Heart left ventricle (tissue), 16 donors: ENCODE measurements at regions of chr4 and their contacts with region 1.

Region 1: DNA sequence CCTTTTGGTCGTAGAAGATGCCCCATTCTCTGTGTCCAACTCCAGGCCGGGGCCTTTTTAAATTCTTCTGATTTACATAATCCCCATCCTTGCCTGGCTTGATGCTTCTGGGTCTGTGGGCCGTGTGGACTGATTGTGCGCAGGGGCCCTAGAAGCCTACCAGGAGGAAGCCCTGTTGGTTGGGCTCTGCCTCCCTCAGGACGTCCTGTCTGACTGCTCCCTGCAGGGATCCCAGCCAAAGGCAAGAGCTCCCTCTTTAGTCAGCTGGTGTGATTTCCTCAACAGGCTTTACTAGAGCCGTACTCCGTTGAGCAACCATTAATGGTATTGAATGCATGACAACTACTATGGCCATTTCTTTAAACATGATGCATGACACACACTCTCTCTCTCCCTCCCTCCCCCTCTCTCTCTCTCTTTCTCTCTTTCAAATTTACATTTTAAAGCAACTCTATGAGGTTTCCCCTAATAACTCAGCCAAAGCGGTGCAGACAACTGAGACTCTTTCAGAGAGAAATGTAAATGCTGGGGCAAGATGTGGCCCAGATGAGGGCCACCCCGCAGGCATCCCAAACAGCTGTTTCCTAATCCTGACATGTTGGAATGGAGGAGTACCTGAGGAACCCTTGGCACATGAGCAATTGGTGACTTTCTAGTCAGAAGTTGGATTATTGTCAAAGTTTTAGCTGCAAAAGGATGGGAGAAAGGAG is 117.3 kb downstream of the DRD5 start:
- DNase-seq: peak in 4 of 5 donors; percentile 56 to 80 (median 74)
- ATAC-seq: peak; percentile 89 to 92 (median 91)
- H3K4me3 ChIP-seq: no peak overlapping the region
- H3K27ac ChIP-seq: no peak overlapping the region
- H3K4me1 ChIP-seq: peaks cover 0 to 14% (median 1%) of the 10 kb centered on the region in 12 donors
- H3K27me3 ChIP-seq: no peaks in the 10 kb centered on the region
- CTCF ChIP-seq: peak; percentile 21 to 70 (median 48)
- POLR2A ChIP-seq: no peak

Region 2: DNA sequence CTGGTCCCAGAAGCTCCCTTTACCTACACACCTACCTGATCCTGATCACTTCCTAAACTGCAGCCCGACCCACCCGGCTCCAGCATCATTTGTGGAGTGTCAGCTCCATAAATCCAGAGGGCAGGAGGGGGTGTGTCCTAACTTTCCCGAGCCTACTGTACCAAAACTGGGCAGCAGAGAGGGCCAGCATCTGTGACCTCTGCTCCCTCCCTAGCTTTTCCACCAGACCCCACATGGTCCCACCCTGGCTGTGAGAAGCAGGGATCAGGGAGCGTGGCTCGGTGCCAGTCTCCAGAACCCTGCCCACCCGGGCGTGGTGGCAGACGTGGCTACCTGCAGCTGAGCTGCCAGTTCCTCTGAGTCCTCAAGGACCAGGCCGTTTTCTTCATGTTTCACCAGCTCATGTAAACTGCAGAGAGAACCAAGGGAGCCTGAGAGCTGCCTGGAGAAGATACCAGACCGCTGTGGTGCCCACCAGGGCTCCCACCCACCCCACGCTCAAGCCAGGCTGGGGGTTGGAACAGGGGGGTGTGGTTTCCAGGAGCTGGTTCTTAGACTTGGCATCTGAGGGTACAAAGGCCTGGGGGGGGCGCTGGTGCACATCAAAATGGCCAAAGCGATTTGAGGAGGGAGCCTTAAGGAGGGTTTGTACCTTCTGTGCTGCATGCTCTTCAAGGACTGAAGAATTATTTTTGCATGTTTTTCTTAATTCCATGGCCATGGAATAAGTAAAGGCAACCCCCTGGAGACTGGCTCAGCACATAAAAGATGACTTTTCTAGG is 194.0 kb before region 1 on chr4:
- intact Hi-C with region 1: loop called in 1 of 10 experiments (anchors 10 kb)
- DNase-seq: no peak
- ATAC-seq: no peak
- H3K4me3 ChIP-seq: no peak overlapping the region
- H3K27ac ChIP-seq: no peak overlapping the region
- H3K4me1 ChIP-seq: no peaks in the 10 kb centered on the region
- H3K27me3 ChIP-seq: peaks cover 0 to 4% (median 0%) of the 10 kb centered on the region in 9 donors
- CTCF ChIP-seq: no peak
- POLR2A ChIP-seq: no peak

Region 3: GRCh38 chr4:9804918-9805317 is 93.8 kb before region 1 on chr4:
- intact Hi-C with region 1: no loop called
- DNase-seq: no peak
- ATAC-seq: no peak
- H3K4me3 ChIP-seq: no peak overlapping the region
- H3K27ac ChIP-seq: no peak overlapping the region
- H3K4me1 ChIP-seq: no peaks in the 10 kb centered on the region
- H3K27me3 ChIP-seq: peaks cover 0 to 11% (median 0%) of the 10 kb centered on the region in 9 donors
- CTCF ChIP-seq: no peak
- POLR2A ChIP-seq: no peak

Region 4: GRCh38 chr4:10006231-10006600 is 107.5 kb after region 1 on chr4:
- intact Hi-C with region 1: loop called in 8 of 10 experiments (anchors 5 to 10 kb)
- DNase-seq: peak in 1 of 5 donors; percentile 45
- ATAC-seq: peak; percentile 76 to 93 (median 88)
- H3K4me3 ChIP-seq: no peak overlapping the region
- H3K27ac ChIP-seq: peak overlapping the region in 10 of 12 donors; percentile 8 to 54 (median 31)
- H3K4me1 ChIP-seq: peaks cover 0 to 46% (median 25%) of the 10 kb centered on the region in 12 donors
- H3K27me3 ChIP-seq: no peaks in the 10 kb centered on the region
- CTCF ChIP-seq: no peak
- POLR2A ChIP-seq: no peak

Region 5: DNA sequence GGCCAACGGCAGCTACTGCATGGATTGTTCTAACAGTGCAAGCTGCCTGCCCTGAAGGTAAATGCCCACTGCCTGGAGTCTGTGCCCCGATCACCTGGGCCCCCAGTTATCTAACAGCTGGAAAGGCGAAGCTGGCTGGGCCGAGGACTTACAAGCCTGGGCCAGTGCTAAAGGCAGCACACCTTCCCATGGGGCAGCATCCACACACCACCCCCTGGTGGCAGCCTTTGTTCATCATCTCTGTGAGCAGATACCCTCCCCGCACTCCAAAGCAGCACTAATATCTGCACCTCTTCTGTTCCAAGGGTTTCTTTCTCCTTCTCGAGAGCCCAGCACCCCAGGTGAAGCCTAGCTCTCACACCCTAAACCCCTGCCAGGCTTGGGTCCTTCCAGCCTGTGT is 115.0 kb after region 1 on chr4:
- intact Hi-C with region 1: loop called in 9 of 10 experiments (anchors 2 to 10 kb)
- DNase-seq: peak in 2 of 5 donors; percentile 46 to 58
- ATAC-seq: peak; percentile 40 to 71 (median 69)
- H3K4me3 ChIP-seq: no peak overlapping the region
- H3K27ac ChIP-seq: no peak overlapping the region
- H3K4me1 ChIP-seq: peaks cover 0 to 17% (median 6%) of the 10 kb centered on the region in 12 donors
- H3K27me3 ChIP-seq: no peaks in the 10 kb centered on the region
- CTCF ChIP-seq: peak; percentile 34 to 60 (median 39)
- POLR2A ChIP-seq: no peak

Region 6: DNA sequence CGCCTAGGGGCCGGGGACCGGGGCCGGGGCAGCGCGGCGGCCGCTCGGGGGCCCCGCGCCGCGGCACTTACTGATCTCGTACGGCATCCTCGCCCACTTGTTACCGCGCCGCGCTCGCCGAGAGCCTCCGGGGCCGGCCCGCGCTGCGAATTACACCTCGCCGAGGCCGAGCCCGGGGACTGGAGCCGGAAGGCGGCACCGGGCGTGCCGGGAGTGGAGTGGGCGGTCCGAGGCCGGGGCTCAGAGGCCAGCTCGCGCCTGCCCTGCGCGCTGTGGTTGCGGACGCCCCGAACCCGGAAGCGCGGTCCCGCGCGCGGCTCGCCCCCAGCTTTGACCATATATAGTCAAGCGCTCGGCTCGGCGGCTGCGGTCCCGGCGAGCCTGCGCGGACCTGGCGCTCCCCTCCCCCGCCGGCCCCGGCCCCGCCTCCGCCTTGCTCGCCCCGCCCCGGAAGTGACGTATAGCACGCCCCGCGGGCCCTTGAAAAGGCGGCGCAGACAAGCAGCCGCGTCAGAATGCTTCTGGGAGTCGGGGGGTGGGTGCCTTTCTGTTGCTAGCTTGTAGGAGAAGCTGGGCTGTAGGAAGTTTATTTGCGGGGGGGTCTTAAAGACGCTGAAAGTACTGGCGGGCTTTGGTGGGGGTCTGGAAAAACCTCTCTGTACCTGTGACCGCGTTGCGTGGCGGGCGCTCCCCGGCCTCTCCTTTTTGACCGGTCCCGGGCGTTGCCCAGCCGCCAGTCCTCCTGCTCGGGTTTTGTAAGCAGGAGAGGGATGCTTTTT is 218.0 kb after region 1 on chr4 and contains the start of gene WDR1:
- intact Hi-C with region 1: no loop called
- DNase-seq: peak; percentile 97 to 99 (median 98)
- ATAC-seq: peak; percentile 95 to 98 (median 96)
- H3K4me3 ChIP-seq: peak within 1 kb of the TSS; percentile 63 to 89 (median 78)
- H3K27ac ChIP-seq: peak within 1 kb of the TSS; percentile 85 to 99 (median 96)
- H3K4me1 ChIP-seq: peaks cover 0 to 54% (median 39%) of the 10 kb centered on the region in 12 donors
- H3K27me3 ChIP-seq: no peaks in the 10 kb centered on the region
- CTCF ChIP-seq: no peak
- POLR2A ChIP-seq: peak; percentile 92 to 99
- total RNA-seq, gene WDR1: 113 to 299 (median 185) TPM